ENCODE measurements at regions of chr16 and their contacts with region 1.

Region 1: GRCh38 chr16:30844671-30845449 is 49.0 kb downstream of the BCL7C start:
- DNase-seq: peak; percentile 22 to 88
- ATAC-seq: peak; percentile 74 to 91 (median 86)
- H3K4me3 ChIP-seq: peak overlapping the region in 6 of 10 donors; percentile 28 to 39 (median 35)
- H3K27ac ChIP-seq: peak overlapping the region in 9 of 10 donors; percentile 27 to 71 (median 63)
- H3K4me1 ChIP-seq: peaks cover 4 to 29% (median 13%) of the 10 kb centered on the region in 9 donors
- H3K27me3 ChIP-seq: no peaks in the 10 kb centered on the region
- CTCF ChIP-seq: peak; percentile 83 to 92 (median 89)

Region 2: DNA sequence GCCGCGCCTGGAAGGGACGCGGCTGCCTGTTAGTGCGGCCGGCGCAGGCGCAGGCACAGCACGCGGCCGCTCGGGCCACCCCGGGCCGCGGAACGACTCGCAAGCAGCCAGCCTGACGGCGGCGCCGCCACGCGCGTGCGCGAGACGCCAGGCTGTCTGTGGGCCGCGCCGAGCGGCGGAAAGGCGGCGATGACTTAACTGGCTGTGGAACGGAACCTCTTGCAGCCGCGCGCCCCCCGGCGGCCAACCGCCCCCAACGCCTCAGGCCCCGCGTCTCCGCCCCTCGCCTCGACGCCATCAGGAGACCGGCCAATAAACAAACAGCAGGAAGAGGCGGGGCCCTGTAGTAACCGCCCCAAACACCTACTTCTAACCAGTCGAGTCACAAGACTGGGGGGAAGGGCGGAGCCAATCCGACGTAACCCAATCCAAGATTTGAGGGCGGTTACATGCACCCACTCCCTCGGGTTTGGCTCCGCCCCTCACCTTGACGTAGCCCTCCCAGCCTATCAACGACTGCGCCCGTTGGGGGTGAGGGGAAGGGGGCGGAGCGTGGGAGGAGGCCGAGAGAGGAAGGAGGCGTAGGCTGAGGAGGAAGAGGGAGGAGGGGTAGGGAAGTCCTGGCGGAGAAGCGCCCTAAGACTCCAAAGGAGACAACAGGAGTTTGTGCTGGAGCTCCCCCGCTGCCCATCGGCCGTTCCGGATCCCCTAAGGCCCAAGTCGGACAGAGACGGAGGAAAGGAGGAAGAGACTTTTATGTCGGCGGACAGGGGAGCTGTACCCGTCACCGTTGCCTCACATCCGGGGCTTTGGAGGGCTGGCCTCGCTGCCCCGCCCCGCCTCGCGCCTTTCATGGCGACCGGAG is 186.8 kb before region 1 on chr16 and contains the start of gene FBRS:
- intact Hi-C with region 1: no loop called
- DNase-seq: peak; percentile 100
- ATAC-seq: peak; percentile 85 to 95 (median 92)
- H3K4me3 ChIP-seq: peak within 1 kb of the TSS; percentile 64 to 91 (median 82)
- H3K27ac ChIP-seq: peak within 1 kb of the TSS; percentile 94 to 99 (median 98)
- H3K4me1 ChIP-seq: peaks cover 15 to 46% (median 44%) of the 10 kb centered on the region in 9 donors
- H3K27me3 ChIP-seq: no peaks in the 10 kb centered on the region
- CTCF ChIP-seq: peak; percentile 48 to 98 (median 91)
- total RNA-seq, gene FBRS: 24.6 to 38.5 (median 27.5) TPM

Region 3: DNA sequence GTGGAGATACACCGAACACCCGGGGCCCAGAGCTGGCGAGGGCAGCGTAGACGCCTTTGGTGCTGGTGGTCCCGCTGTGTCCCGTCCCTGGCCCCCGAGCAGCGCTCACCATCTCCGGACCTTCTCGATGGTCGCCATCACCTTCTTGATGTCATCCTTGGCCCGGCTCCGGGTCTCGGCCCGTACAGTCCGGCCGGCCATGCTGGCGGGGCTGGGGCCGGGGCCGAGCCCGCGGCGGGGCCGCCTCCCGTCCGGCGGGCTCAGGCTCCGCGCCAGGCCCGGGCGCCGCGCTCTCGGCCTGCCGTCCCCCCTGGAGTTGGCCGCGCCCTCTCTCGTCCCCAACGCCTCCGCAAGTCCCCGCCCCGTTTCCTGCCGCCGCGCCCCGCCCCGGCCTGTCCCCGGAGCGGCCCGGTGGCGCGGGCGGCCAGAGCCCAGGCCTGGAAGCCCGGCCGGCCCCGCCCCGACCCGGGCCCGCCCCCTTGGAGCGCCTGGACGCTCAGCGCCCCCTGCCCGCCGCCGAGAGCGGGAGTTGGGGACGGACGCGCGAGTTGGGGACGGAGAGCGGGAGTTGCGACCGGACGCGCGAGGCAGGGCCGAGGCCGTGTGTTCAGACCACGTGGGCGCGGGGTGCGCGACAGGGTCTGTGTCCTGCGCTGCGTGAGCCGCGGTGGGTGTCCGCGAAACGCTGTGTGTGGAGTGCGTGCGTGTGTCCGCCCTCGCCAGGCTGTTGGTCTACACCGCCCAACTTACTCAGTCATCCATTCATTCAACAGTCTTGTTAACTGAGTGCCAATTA is 49.1 kb after region 1 on chr16 and contains the start of gene BCL7C:
- intact Hi-C with region 1: loop called in 2 of 10 experiments (anchors 2 to 5 kb)
- DNase-seq: peak; percentile 94 to 96
- ATAC-seq: peak; percentile 70 to 89 (median 86)
- H3K4me3 ChIP-seq: peak within 1 kb of the TSS; percentile 73 to 100 (median 94)
- H3K27ac ChIP-seq: peak within 1 kb of the TSS; percentile 92 to 100 (median 97)
- H3K4me1 ChIP-seq: peaks cover 13 to 48% (median 36%) of the 10 kb centered on the region in 9 donors
- H3K27me3 ChIP-seq: no peaks in the 10 kb centered on the region
- CTCF ChIP-seq: peak in 8 of 9 donors; percentile 37 to 81 (median 58)
- total RNA-seq, gene BCL7C: 24.2 to 31.3 (median 27.0) TPM

Region 4: GRCh38 chr16:30902029-30902972 is 57.4 kb after region 1 on chr16:
- intact Hi-C with region 1: loop called in 9 of 10 experiments (anchors 1 to 10 kb)
- DNase-seq: peak; percentile 62 to 79
- ATAC-seq: peak; percentile 62 to 96 (median 78)
- H3K4me3 ChIP-seq: peak overlapping the region; percentile 32 to 62 (median 58)
- H3K27ac ChIP-seq: peak overlapping the region; percentile 83 to 96 (median 94)
- H3K4me1 ChIP-seq: peaks cover 2 to 47% (median 35%) of the 10 kb centered on the region in 9 donors
- H3K27me3 ChIP-seq: no peaks in the 10 kb centered on the region
- CTCF ChIP-seq: peak in 8 of 9 donors; percentile 8 to 62 (median 18)

Region 5: GRCh38 chr16:30910427-30911029 is 65.7 kb after region 1 on chr16:
- intact Hi-C with region 1: loop called in 3 of 10 experiments (anchors 5 to 10 kb)
- DNase-seq: no peak
- ATAC-seq: no peak
- H3K4me3 ChIP-seq: no peak overlapping the region
- H3K27ac ChIP-seq: no peak overlapping the region
- H3K4me1 ChIP-seq: no peaks in the 10 kb centered on the region
- H3K27me3 ChIP-seq: no peaks in the 10 kb centered on the region
- CTCF ChIP-seq: no peak

Region 6: DNA sequence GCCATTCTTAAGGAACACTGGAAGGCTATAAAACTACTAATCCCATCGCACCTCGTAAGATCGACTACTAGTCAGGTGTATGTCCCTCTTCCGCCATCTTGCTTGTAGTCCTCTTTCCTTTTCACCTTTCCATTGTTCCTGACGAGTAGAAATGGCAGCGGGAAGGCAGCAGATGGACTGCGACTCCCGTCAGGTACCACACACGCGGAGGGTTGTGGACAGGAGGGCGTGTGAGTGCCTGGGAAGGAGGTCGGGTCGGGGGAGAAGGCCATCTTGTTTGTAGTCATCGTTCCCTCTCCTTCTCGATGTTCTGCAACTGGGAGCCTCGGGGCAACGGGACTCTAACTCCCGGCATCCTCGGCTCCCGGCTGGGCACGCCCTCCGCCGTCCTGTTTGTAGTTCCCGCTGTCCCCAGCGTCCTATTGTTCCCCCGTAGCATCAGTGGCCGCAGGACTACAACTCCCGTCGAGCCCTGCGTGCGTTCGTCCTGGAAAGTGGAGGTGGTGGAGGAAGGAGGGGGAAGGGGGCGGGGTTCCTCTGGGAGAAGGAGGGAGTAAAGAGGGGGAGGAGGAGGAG is 78.2 kb after region 1 on chr16:
- intact Hi-C with region 1: loop called (anchors 1 to 5 kb)
- DNase-seq: peak; percentile 99 to 100
- ATAC-seq: peak; percentile 80 to 89 (median 86)
- H3K4me3 ChIP-seq: peak overlapping the region; percentile 57 to 89 (median 73)
- H3K27ac ChIP-seq: peak overlapping the region; percentile 86 to 97 (median 94)
- H3K4me1 ChIP-seq: peaks cover 0 to 24% (median 16%) of the 10 kb centered on the region in 9 donors
- H3K27me3 ChIP-seq: no peaks in the 10 kb centered on the region
- CTCF ChIP-seq: no peak